K562 (cell line): ENCODE measurements at regions of chr1 and their contacts with region 1.

Region 1: DNA sequence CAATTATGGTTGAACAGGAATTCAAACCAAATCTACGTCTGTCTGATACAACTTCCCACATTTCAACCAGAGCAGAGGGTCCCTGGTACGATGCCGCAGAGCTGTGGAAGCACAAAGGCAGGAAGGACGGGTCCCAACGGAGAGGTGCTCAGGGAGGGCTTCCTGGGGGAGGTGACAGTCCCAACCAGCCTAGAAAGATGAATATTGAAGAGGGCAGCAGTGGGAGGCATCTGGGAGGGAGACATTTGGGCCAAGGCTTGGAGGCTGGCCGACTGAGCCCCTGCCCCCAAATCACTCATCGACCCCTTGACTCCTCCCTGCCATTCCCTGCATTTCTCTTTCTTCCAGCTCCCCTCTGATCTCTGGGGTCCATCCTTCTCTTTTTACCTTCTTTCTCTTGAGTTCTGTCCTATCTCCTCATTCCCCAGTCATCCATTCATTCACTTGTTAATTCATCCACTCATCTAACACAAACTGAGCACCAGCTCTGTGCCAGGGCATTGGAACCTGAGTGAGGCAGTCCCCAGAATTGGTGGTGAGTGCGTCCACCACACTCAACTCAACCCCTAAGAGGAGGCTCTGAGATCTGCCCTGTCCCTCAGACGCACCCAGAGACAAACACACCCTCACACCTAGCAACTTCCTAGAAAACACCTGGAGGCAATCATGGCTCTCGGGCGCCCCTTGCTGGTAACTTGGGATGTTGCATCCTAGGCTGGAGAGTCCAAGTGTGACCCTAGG is 13.2 kb upstream of the CELA3B start:
- DNase-seq: peak; percentile 87 to 93 (median 89)
- ATAC-seq: peak; percentile 97
- H3K4me3 ChIP-seq: no peak overlapping the region
- H3K27ac ChIP-seq: no peak overlapping the region; the same call in 2 of the 3 replicates
- H3K4me1 ChIP-seq: peaks cover 4 to 9% of the 10 kb centered on the region in 2 experiments; a peak in 3 of 5 replicates
- H3K27me3 ChIP-seq: peaks cover 2 to 6% of the 10 kb centered on the region in 2 experiments; a peak in 2 of 5 replicates
- CTCF ChIP-seq: peak; percentile 91 to 97 (median 97)
- EP300 ChIP-seq: peak; percentile 35; the same call in 1 of the 2 replicates
- POLR2A ChIP-seq: no peak
- RAD21 ChIP-seq: peak; percentile 97 to 99

Region 2: GRCh38 chr1:21508580-21509350 is 454.9 kb before region 1 on chr1:
- CTCF ChIA-PET with region 1: no interaction called
- POLR2A ChIA-PET with region 1: no interaction called
- in situ Hi-C with region 1: no loop called
- intact Hi-C with region 1: loop called (anchors 10 kb)
- DNase-seq: peak; percentile 82 to 98 (median 94)
- ATAC-seq: peak; percentile 97
- H3K4me3 ChIP-seq: no peak overlapping the region
- H3K27ac ChIP-seq: no peak overlapping the region
- H3K4me1 ChIP-seq: peaks cover 0 to 14% of the 10 kb centered on the region in 2 experiments; a peak in 3 of 5 replicates
- H3K27me3 ChIP-seq: peaks cover 30 to 45% of the 10 kb centered on the region in 2 experiments
- CTCF ChIP-seq: peak; percentile 64 to 82 (median 75)
- EP300 ChIP-seq: no peak
- POLR2A ChIP-seq: no peak
- RAD21 ChIP-seq: peak; percentile 44 to 74

Region 3: GRCh38 chr1:21703318-21703963 is 260.2 kb before region 1 on chr1:
- CTCF ChIA-PET with region 1: interaction called, 7 read pairs
- POLR2A ChIA-PET with region 1: no interaction called
- in situ Hi-C with region 1: no loop called
- intact Hi-C with region 1: loop called (anchors 1 kb)
- DNase-seq: peak; percentile 47 to 71 (median 54)
- ATAC-seq: peak; percentile 89
- H3K4me3 ChIP-seq: no peak overlapping the region
- H3K27ac ChIP-seq: peak overlapping the region; percentile 59
- H3K4me1 ChIP-seq: peaks cover 0 to 16% of the 10 kb centered on the region in 2 experiments; a peak in 2 of 5 replicates
- H3K27me3 ChIP-seq: no peaks in the 10 kb centered on the region
- CTCF ChIP-seq: peak; percentile 69
- EP300 ChIP-seq: no peak
- POLR2A ChIP-seq: no peak
- RAD21 ChIP-seq: peak; percentile 45 to 72; a peak in 3 of 4 replicates

Region 4: DNA sequence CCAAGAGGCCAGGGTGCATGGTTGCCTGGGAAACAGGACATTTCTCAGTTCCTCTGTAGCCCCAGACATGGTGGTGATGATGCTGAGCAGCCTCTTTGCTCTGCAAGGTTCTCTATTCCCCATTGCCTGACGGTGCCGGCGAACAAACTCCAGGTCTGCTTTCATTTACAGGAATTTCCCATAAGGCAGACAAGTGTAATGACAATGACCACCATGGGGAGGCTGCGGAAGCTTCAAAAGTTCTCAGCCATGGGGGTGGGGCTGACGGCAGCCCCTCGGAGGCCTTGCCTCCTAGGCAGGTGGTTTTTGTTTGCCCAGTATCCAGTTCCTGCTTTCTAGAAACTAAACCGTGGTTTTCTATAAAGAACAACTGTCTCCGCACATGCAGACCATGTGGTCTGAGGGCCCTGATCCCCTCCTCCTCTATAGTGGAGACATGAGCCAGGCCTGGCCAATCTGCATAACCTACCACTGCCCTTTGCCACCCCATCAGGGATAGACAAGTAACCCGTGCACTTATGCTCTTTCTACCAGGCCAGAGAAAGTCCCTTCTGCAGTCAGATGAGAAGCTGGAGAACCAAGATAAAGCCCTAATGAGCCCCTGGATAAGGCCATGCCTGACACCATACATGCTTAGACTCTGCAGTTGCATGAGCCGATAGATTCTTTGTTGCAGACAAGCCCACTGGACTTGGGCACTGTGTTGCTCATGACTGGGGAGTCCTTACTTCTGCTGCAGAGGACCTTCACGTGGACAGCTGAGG is 97.5 kb before region 1 on chr1:
- CTCF ChIA-PET with region 1: no interaction called
- POLR2A ChIA-PET with region 1: no interaction called
- in situ Hi-C with region 1: no loop called
- intact Hi-C with region 1: loop called (anchors 1 kb)
- DNase-seq: peak; percentile 73 to 84 (median 81)
- ATAC-seq: peak; percentile 86
- H3K4me3 ChIP-seq: no peak overlapping the region
- H3K27ac ChIP-seq: peak overlapping the region; percentile 17; the same call in 2 of the 3 replicates
- H3K4me1 ChIP-seq: peaks cover 21 to 50% of the 10 kb centered on the region in 2 experiments; a peak in 4 of 5 replicates
- H3K27me3 ChIP-seq: no peaks in the 10 kb centered on the region
- CTCF ChIP-seq: peak; percentile 28 to 57 (median 37); a peak in 5 of 6 replicates
- EP300 ChIP-seq: peak; percentile 63; the same call in 1 of the 2 replicates
- POLR2A ChIP-seq: no peak
- RAD21 ChIP-seq: peak in 1 of 2 experiments; percentile 49; a peak in 2 of 4 replicates

Region 5: GRCh38 chr1:21909787-21910503 is 53.7 kb before region 1 on chr1:
- CTCF ChIA-PET with region 1: no interaction called
- POLR2A ChIA-PET with region 1: no interaction called
- in situ Hi-C with region 1: no loop called
- intact Hi-C with region 1: loop called (anchors 2 kb)
- DNase-seq: peak in 2 of 4 experiments; percentile 27 to 60
- ATAC-seq: no peak
- H3K4me3 ChIP-seq: no peak overlapping the region
- H3K27ac ChIP-seq: peak overlapping the region; percentile 46
- H3K4me1 ChIP-seq: peaks cover 76 to 81% of the 10 kb centered on the region in 2 experiments
- H3K27me3 ChIP-seq: no peaks in the 10 kb centered on the region
- CTCF ChIP-seq: no peak
- EP300 ChIP-seq: no peak
- POLR2A ChIP-seq: no peak
- RAD21 ChIP-seq: no peak

Region 6: GRCh38 chr1:21937372-21938221 is 26.1 kb before region 1 on chr1:
- CTCF ChIA-PET with region 1: no interaction called
- POLR2A ChIA-PET with region 1: no interaction called
- in situ Hi-C with region 1: no loop called
- intact Hi-C with region 1: no loop called
- DNase-seq: peak in 3 of 4 experiments; percentile 90 to 98 (median 96)
- ATAC-seq: peak; percentile 83
- H3K4me3 ChIP-seq: peak overlapping the region; percentile 39
- H3K27ac ChIP-seq: peak overlapping the region; percentile 60
- H3K4me1 ChIP-seq: peaks cover 73 to 79% of the 10 kb centered on the region in 2 experiments
- H3K27me3 ChIP-seq: no peaks in the 10 kb centered on the region
- CTCF ChIP-seq: no peak
- EP300 ChIP-seq: 0 out of 2 replicates have a peak, but pooled peaks have one; percentile 8
- POLR2A ChIP-seq: peak; percentile 44; the same call in 1 of the 2 replicates
- RAD21 ChIP-seq: 0 out of 4 replicates have a peak, but pooled peaks of 1 of the 2 experiments have one; percentile 3